K562 (cell line): ENCODE measurements at regions of chr2 and their contacts with region 1.

Region 1: DNA sequence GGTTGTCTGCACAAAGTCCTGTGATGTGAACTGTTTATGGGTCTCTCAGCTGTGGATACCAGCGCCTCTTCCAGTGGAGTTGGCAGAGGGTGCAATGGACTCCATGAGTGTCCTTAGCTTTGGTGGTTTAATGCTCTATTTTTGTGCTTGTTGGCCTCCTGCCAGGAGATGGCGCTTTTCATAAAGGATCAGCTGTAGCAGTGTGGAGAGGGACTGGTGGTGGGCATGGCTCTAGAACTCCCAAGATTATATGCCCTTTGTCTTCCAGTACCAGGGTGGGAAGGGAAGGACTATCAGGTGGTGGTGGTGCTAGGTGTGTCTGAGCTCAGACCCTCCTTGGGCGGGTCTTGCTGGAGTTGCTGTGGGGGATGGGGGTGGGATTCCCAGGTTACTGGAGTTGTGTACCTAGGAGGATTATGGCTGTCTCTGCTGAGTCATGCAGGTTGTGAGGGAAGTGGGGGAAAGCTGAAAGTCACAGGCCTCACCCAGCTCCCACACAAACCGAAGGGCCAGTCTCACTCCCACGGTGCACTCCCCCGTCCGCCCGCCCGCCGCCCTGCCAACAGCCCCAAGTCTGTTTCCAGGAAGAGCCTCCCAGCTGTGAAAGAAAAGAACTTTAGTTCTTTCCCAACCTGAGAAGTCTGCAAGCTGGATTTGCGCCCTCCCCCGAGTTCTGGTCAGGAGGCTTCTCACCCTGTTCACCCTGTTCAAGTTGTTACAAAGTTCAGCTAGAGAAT is 108.1 kb downstream of the MARCO start:
- DNase-seq: peak; percentile 24 to 68 (median 36)
- ATAC-seq: peak; percentile 88
- H3K4me3 ChIP-seq: no peak overlapping the region
- H3K27ac ChIP-seq: peak overlapping the region; percentile 64; the same call in 2 of the 3 replicates
- H3K4me1 ChIP-seq: peaks cover 8 to 10% of the 10 kb centered on the region in 2 experiments
- H3K27me3 ChIP-seq: peaks cover 0 to 5% of the 10 kb centered on the region in 2 experiments; a peak in 1 of 5 replicates
- CTCF ChIP-seq: peak; percentile 36 to 43 (median 38)
- EP300 ChIP-seq: no peak
- POLR2A ChIP-seq: no peak
- RAD21 ChIP-seq: peak in 1 of 2 experiments; percentile 32; a peak in 2 of 4 replicates

Region 2: DNA sequence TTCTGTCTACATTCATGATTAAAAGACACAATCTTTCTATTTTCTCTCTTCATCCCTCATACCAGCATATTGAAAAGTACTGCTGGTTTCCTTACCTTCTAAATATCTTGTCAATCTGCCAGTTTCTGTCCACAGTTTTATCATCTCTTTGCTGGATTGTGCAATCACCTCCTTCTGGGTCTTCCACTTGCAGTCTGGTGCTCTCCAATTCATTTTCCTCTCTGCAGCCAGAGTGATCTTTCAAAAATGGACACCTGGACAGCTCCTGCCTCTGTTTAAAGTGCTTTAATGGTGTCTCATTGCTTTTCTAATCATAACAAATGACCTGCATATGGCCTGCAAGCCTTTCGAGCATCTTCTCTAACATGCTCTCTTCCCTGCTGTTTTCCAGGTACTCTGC is 14.4 kb after region 1 on chr2:
- CTCF ChIA-PET with region 1: no interaction called
- POLR2A ChIA-PET with region 1: no interaction called
- in situ Hi-C with region 1: no loop called
- intact Hi-C with region 1: no loop called
- DNase-seq: no peak
- ATAC-seq: no peak
- H3K4me3 ChIP-seq: no peak overlapping the region
- H3K27ac ChIP-seq: no peak overlapping the region
- H3K4me1 ChIP-seq: no peaks in the 10 kb centered on the region; a peak in 1 of 5 replicates
- H3K27me3 ChIP-seq: no peaks in the 10 kb centered on the region; a peak in 1 of 5 replicates
- CTCF ChIP-seq: no peak
- EP300 ChIP-seq: no peak
- POLR2A ChIP-seq: no peak
- RAD21 ChIP-seq: no peak

Region 3: DNA sequence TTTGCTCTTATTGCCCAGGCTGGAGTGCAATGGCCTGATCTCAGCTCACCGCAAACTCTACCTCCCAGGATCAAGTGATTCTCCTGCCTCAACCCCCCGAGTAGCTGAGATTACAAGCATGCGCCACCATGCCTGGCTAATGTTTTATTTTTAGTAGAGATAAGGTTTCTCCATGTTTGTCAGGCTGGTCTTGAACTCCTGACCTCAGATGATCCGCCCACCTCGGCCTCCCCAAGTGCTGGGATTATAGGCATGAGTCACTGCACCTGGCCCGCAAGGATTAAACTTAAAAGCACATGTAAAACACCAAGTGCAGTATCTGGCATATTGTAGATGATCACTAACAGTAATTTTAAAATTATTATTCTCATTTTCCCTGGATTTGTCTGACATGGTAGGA is 35.5 kb after region 1 on chr2:
- CTCF ChIA-PET with region 1: no interaction called
- POLR2A ChIA-PET with region 1: no interaction called
- in situ Hi-C with region 1: no loop called
- intact Hi-C with region 1: no loop called
- DNase-seq: peak in 1 of 4 experiments; percentile 4
- ATAC-seq: no peak
- H3K4me3 ChIP-seq: no peak overlapping the region
- H3K27ac ChIP-seq: no peak overlapping the region
- H3K4me1 ChIP-seq: no peaks in the 10 kb centered on the region
- H3K27me3 ChIP-seq: peaks cover 5 to 23% of the 10 kb centered on the region in 2 experiments; a peak in 3 of 5 replicates
- CTCF ChIP-seq: no peak
- EP300 ChIP-seq: no peak
- POLR2A ChIP-seq: no peak
- RAD21 ChIP-seq: no peak

Region 4: GRCh38 chr2:119111115-119112017 is 61.2 kb after region 1 on chr2:
- CTCF ChIA-PET with region 1: no interaction called
- POLR2A ChIA-PET with region 1: no interaction called
- in situ Hi-C with region 1: no loop called
- intact Hi-C with region 1: no loop called
- DNase-seq: no peak
- ATAC-seq: no peak
- H3K4me3 ChIP-seq: no peak overlapping the region
- H3K27ac ChIP-seq: no peak overlapping the region
- H3K4me1 ChIP-seq: no peaks in the 10 kb centered on the region
- H3K27me3 ChIP-seq: peaks cover 0 to 11% of the 10 kb centered on the region in 2 experiments; a peak in 2 of 5 replicates
- CTCF ChIP-seq: no peak
- EP300 ChIP-seq: no peak
- POLR2A ChIP-seq: no peak
- RAD21 ChIP-seq: no peak

Region 5: DNA sequence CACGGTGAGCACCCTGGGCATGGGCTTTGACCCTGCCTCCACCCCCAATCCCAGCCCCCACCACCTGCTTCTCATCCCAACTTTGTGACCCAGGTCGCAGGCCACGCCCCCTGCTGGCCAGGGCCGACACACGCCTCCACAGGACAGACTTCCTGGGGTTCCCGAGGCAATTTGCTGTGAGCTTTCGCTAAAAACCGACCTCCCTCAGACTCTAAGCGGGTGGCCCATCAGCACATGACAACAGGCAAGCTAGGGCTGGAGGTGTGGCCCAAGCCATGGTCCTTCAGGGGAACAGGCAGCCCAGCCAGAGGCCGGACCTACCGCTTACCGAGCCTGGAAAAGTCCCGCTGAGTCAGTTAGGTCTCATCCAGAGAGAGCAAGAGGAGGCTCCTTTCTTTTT is 76.5 kb after region 1 on chr2:
- CTCF ChIA-PET with region 1: no interaction called
- POLR2A ChIA-PET with region 1: no interaction called
- in situ Hi-C with region 1: no loop called
- intact Hi-C with region 1: loop called (anchors 10 kb)
- DNase-seq: peak; percentile 76 to 88 (median 84)
- ATAC-seq: peak; percentile 95
- H3K4me3 ChIP-seq: no peak overlapping the region
- H3K27ac ChIP-seq: no peak overlapping the region
- H3K4me1 ChIP-seq: peaks cover 0 to 4% of the 10 kb centered on the region in 2 experiments; a peak in 2 of 5 replicates
- H3K27me3 ChIP-seq: peaks cover 12 to 52% of the 10 kb centered on the region in 2 experiments
- CTCF ChIP-seq: peak; percentile 69 to 80 (median 78)
- EP300 ChIP-seq: no peak
- POLR2A ChIP-seq: no peak
- RAD21 ChIP-seq: peak; percentile 18 to 47; a peak in 2 of 4 replicates